ENCODE measurements at regions of chr11 and their contacts with region 1.

Region 1: GRCh38 chr11:13276832-13277767 is 490 bp upstream of the BMAL1 start:
- DNase-seq: peak; percentile 97
- ATAC-seq: peak; percentile 91
- H3K4me3 Mint-ChIP-seq: peak overlapping the region; percentile 94
- H3K27ac Mint-ChIP-seq: peak overlapping the region; percentile 82
- H3K4me1 Mint-ChIP-seq: peaks cover 47% of the 10 kb centered on the region
- H3K27me3 Mint-ChIP-seq: peaks cover 36% of the 10 kb centered on the region

Region 2: DNA sequence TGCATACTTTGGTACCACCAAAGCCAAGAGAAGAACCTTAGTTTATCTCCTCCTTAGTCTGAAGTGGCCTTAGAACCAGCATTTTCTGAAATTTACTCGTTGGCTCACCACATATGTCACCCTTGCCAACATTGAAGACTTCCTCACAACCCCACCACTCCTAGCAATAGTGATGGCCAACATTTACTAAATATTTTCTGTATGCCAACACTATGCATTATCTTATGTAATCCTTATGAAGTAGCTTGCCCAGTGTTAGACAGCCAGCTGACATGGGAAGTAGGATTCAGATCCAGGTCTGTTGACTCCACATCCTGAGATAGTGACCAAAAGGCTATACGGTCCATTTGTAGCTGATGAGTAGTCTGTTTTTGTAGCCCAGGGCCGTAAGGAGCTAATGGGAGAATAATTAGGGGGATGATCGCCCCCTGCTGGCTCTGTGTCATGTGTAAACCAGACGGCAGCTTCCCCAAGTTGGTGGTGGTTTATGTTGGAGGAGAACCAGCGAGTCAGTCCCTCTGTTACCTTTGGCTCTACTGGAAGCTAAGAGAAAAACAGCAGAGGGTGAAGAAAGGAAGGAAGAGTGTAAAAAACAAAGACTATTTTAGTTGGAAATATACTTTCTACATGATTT is 388.5 kb before region 1 on chr11:
- CTCF ChIA-PET with region 1: no interaction called
- POLR2A ChIA-PET with region 1: no interaction called
- DNase-seq: peak; percentile 75
- ATAC-seq: peak; percentile 60
- H3K4me3 Mint-ChIP-seq: no peak overlapping the region
- H3K27ac Mint-ChIP-seq: no peak overlapping the region
- H3K4me1 Mint-ChIP-seq: no peaks in the 10 kb centered on the region
- H3K27me3 Mint-ChIP-seq: peaks cover 3% of the 10 kb centered on the region

Region 3: DNA sequence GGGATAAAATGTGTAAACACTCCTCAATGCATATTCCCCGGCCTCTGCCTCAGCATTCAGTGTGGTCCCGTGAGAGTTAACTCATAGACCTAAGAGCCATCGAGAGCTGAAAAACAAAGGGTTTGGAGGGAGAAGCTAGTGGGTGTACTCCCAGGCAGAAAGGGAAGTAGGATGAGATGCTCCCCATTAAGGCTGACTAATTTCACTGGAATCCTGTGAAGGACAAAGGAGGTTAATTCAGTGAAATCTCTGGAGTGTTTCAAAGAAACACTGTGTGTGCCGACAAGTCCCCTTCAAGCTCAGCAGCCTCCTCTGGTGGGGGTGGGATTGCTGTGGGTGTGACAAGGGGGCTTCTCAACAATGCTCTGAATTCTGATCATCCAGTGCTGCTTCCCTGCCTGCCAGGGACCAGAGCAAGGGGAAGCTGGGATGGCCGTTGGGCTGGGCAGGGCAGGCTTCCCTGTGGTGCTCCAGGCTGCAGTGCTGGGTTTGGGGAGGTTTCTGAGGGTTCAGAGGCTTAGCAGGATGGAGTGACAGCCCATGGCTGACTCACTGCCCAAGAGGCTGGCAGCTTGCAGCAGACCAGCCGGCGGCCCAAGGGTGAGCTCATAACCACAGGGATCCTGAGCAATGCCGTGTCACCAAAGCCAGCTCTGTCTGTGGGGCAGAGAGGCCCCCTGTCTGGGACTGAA is 60.9 kb before region 1 on chr11:
- CTCF ChIA-PET with region 1: no interaction called
- POLR2A ChIA-PET with region 1: no interaction called
- DNase-seq: no peak
- ATAC-seq: no peak
- H3K4me3 Mint-ChIP-seq: no peak overlapping the region
- H3K27ac Mint-ChIP-seq: no peak overlapping the region
- H3K4me1 Mint-ChIP-seq: peaks cover 3% of the 10 kb centered on the region
- H3K27me3 Mint-ChIP-seq: peaks cover 10% of the 10 kb centered on the region

Region 4: DNA sequence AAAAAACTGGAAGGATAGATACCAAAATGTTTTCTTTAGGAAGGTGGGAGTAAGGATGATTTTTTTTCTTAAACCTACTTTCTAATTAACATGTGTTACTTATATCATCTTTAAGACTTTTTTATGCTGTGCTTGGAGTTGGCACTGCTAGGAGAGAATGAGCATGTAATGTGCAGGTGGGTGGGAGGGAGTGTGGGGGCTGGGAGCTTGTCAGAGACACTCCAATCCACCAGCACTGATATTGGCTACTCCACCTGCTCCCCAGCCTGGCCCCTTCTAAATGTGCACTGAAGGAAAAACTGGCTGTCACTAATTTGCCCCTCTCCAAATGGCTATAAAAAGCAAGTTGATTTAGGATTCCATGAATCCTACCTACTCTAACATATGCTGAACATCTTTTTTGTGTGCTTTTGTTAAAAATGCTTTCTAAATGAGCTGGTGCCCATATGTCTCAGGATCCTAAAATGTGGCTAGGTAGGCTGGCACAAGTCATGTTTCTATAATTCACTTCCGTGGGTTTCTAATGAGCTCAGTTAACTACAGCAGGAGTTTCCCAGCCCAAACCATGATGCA is 43.8 kb before region 1 on chr11:
- CTCF ChIA-PET with region 1: no interaction called
- POLR2A ChIA-PET with region 1: no interaction called
- DNase-seq: no peak
- ATAC-seq: no peak
- H3K4me3 Mint-ChIP-seq: no peak overlapping the region
- H3K27ac Mint-ChIP-seq: no peak overlapping the region
- H3K4me1 Mint-ChIP-seq: no peaks in the 10 kb centered on the region
- H3K27me3 Mint-ChIP-seq: peaks cover 31% of the 10 kb centered on the region

Region 5: GRCh38 chr11:13297917-13298356 is 20.8 kb after region 1 on chr11:
- CTCF ChIA-PET with region 1: interaction called, 18 read pairs
- POLR2A ChIA-PET with region 1: interaction called, 6 read pairs
- DNase-seq: peak; percentile 79
- ATAC-seq: peak; percentile 94
- H3K4me3 Mint-ChIP-seq: peak overlapping the region; percentile 36
- H3K27ac Mint-ChIP-seq: peak overlapping the region; percentile 89
- H3K4me1 Mint-ChIP-seq: peaks cover 82% of the 10 kb centered on the region
- H3K27me3 Mint-ChIP-seq: no peaks in the 10 kb centered on the region

Region 6: GRCh38 chr11:13354335-13354734 is 77.2 kb after region 1 on chr11:
- CTCF ChIA-PET with region 1: no interaction called
- POLR2A ChIA-PET with region 1: no interaction called
- DNase-seq: no peak
- ATAC-seq: no peak
- H3K4me3 Mint-ChIP-seq: no peak overlapping the region
- H3K27ac Mint-ChIP-seq: no peak overlapping the region
- H3K4me1 Mint-ChIP-seq: no peaks in the 10 kb centered on the region
- H3K27me3 Mint-ChIP-seq: no peaks in the 10 kb centered on the region